Endothelial cell of umbilical vein (primary cell): ENCODE measurements at regions of chr19 and their contacts with region 1.

Region 1: DNA sequence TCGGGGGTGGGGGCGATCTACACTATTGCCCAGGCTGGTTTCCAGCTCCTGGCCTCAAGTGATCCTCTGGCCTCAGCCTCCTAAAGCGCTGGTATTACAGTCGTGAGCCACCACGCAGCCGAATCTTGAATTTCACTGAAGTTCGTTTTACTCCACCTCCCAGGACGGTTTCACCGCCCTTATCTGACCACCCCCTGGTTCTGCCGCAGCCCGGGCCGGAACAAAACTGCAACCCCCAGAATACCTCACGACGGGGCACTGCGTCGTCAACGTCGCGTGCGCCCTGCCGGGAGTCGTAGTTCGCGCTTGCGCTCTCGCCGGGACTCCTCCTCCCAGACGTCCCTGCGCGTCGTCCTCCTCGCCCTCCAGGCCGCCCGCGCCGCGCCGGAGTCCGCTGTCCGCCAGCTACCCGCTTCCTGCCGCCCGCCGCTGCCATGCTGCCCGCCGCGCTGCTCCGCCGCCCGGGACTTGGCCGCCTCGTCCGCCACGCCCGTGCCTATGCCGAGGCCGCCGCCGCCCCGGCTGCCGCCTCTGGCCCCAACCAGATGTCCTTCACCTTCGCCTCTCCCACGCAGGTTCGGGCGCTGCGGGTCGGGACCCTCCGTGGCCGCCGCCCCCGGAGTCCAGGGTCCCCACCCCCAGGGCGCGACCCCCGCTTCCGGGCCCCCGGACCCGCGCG is at the start of gene ATP5F1D:
- DNase-seq: peak; percentile 91
- H3K4me3 ChIP-seq: peak within 1 kb of the TSS; percentile 38 to 74 (median 58)
- H3K27ac ChIP-seq: peak within 1 kb of the TSS; percentile 36
- H3K4me1 ChIP-seq: peaks cover 12% of the 10 kb centered on the region
- H3K27me3 ChIP-seq: no peaks in the 10 kb centered on the region
- CTCF ChIP-seq: no peak
- POLR2A ChIP-seq: peak; percentile 64
- total RNA-seq, gene ATP5F1D: 190 and 192 TPM in 2 replicates

Region 2: DNA sequence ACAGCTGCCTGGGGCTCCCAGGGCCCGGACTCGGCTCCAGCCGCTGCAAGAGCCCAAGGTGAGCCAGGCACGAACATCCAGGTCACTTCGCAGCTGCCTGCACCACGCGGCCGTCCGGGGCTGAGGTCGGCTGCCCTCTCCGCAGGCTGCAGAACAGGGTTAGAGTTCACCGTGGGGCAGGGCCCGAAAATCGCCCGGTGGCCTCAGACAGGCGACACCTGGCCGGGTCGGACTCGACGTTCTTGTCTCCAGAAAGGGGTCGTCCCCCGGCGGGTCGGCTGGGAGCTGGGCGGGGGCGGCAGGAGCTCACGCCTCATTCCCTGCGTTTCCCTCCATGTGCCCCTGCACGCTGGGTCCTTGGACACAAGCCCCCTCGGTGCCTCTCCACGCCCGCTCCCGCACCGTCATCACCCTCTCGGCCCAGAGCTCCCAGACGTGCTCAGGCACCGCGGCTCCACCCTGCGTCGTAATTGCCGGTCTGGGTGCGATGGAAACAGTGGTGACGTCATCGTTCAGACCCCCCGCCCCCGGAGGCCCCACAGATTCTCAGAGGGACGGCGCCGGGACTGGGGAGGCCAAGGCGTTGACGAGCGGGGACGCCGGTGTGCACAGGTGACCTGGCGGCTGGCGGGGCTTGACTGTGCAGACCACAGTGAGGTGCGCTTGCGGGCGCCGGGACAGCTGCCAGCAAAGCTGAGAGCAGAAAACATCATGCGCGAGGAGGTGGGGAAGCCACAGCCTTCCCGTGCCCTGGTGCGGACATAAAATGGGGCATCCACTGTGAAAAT is 245.3 kb before region 1 on chr19:
- CTCF ChIA-PET with region 1: no interaction called
- POLR2A ChIA-PET with region 1: no interaction called
- dilution Hi-C with region 1: no loop called
- intact Hi-C with region 1: loop called (anchors 5 kb)
- DNase-seq: peak; percentile 35
- H3K4me3 ChIP-seq: no peak overlapping the region
- H3K27ac ChIP-seq: no peak overlapping the region
- H3K4me1 ChIP-seq: no peaks in the 10 kb centered on the region
- H3K27me3 ChIP-seq: peaks cover 20 to 27% of the 10 kb centered on the region in 2 experiments
- CTCF ChIP-seq: no peak
- POLR2A ChIP-seq: no peak

Region 3: DNA sequence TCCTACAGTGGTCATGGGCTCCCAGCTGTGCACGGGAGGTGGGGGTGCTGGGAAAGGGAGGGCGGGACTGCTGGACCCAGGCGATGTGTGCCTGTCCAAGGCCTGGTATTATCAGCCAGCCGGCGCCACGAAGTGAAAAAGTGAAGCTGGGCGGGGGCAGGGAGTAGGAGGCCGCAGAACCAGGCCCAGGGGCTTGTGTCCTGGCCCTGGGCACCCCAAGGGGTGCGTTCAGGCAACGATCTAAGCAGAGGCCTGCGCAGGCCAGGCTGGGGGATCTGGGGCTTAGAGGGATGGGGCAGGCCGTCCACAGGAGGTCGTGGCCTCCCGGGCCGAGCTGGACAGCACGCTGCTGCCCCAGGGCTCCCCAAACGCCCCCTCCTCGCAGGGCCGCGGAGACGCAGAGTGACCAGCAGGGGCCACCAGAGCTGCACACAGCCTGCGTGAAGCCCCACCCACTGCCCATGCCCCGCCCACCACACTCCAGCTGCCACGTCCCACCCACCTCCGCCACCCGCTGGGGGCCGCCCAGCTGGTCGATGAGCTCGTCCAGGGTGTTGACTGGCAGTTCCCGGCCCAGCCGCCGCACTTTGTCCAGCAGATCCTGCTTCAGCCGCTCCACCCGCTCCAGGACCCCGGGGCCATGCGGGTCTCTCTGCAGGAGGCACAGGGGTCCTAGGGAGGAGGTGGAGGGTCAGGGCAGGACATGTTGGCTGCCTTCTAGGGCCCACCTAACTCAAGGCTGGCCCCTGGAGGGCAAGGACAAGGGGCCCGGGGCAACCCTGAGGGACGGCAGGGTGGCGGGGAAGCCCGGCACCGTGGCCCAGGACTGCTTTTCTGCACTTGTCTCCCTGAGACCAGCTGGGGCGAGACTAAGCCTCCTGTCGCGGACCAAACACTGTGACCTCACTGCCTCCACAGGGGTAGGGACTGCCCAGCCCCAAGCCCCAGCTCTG is 128.2 kb before region 1 on chr19:
- CTCF ChIA-PET with region 1: interaction called, 11 read pairs
- POLR2A ChIA-PET with region 1: no interaction called
- dilution Hi-C with region 1: no loop called
- intact Hi-C with region 1: loop called (anchors 2 kb)
- DNase-seq: peak; percentile 93
- H3K4me3 ChIP-seq: no peak overlapping the region
- H3K27ac ChIP-seq: no peak overlapping the region
- H3K4me1 ChIP-seq: peaks cover 5% of the 10 kb centered on the region
- H3K27me3 ChIP-seq: no peaks in the 10 kb centered on the region
- CTCF ChIP-seq: peak; percentile 79 to 94
- POLR2A ChIP-seq: peak; percentile 56

Region 4: GRCh38 chr19:1125601-1126453 is 115.7 kb before region 1 on chr19:
- CTCF ChIA-PET with region 1: no interaction called
- POLR2A ChIA-PET with region 1: no interaction called
- dilution Hi-C with region 1: no loop called
- intact Hi-C with region 1: no loop called
- DNase-seq: peak; percentile 83
- H3K4me3 ChIP-seq: no peak overlapping the region
- H3K27ac ChIP-seq: peak overlapping the region; percentile 80
- H3K4me1 ChIP-seq: peaks cover 19% of the 10 kb centered on the region
- H3K27me3 ChIP-seq: no peaks in the 10 kb centered on the region
- CTCF ChIP-seq: no peak
- POLR2A ChIP-seq: no peak

Region 5: DNA sequence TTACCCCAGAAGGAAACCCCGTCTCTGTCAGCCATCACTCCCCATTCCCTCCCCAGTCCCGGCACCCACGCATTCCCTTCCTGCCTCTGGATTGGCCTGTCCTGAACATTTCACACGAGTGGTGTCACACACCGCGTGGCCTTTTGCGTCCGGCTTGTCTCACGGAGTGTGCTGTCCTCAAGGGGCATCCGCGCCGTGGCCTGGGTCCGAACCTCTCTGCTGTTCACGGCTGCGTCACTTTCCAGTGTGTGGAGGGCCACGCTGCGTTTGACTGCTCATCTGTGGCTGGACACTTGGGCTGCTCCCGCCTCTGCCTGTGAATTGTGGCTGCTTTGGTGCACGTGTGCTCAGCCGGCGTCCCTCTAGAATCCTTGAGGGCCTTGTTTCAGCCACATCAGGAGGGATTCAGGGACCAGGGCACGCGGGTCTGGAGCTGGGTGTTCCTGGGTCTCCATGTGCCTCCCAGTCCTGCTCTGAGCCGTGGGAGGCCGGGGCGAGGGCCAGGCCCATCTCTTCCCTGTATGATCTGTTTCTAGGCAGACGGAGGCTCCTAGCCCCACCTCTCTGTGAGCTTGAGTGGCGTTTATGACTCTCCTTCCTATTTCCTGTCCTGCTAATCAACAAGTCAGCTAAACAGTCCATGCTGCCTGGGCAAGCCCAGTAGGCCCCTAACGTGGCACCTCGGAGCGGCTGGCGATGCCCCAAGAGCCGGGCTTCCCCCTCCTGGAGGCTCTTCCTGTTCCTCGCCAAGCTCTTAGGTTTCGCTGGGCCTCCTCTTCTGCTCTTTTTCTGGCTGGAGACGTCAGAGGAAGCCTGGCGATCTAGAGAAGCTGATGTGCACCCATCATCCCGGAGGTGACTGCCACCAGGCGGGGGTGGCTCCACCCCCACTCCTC is 27.9 kb before region 1 on chr19:
- CTCF ChIA-PET with region 1: interaction called, 13 read pairs
- POLR2A ChIA-PET with region 1: no interaction called
- dilution Hi-C with region 1: no loop called
- intact Hi-C with region 1: no loop called
- DNase-seq: peak; percentile 96
- H3K4me3 ChIP-seq: no peak overlapping the region
- H3K27ac ChIP-seq: peak overlapping the region; percentile 48
- H3K4me1 ChIP-seq: peaks cover 31% of the 10 kb centered on the region
- H3K27me3 ChIP-seq: no peaks in the 10 kb centered on the region
- CTCF ChIP-seq: no peak
- POLR2A ChIP-seq: peak; percentile 27

Region 6: DNA sequence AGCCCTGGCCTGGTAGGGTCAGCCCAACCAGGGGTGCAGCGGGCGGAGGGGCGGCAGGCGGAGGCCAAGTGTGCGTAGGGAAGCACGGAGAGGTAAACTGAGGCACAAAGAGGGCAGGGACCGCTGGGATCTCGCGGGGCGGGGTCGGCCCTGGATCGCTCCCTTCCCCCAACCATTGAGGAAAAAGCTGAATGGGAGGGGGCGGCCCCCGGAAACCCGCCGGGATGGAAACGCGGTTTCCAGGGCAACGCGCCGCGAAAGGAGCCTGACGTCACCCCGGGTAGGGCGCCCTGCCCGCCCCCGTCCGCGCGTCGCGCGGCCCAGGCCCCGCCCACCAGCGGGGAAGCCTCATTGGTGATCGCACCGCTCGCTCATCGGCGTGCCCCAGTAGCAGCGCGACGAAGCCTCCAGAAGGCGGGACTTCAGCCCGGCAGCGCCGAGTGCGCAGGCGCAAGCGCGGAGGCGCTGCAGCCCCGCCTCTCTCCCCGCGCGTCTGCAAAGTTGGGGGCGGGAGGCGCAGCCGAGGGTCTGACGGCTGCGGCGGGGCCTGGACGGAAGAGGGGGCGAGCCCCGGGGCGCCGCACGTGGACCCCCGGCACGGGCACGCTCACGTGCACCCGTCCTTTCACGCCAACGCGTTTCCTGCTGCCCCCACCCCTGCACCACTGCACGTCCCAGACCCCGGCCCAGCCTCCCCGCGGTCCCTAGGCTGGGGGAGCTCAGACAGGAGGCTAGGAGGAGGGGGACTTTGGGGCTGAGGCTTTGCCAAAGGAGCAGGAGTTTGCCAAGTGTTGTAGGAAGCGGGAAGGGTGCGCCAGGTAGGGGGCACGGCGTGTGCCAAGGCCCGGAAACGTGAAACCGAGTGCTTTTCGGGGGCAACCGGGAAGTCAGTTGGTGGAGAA is 19.3 kb after region 1 on chr19:
- CTCF ChIA-PET with region 1: interaction called, 1,001 read pairs
- POLR2A ChIA-PET with region 1: interaction called, 24 read pairs
- dilution Hi-C with region 1: no loop called
- intact Hi-C with region 1: loop called (anchors 1 kb)
- DNase-seq: peak; percentile 96
- H3K4me3 ChIP-seq: peak overlapping the region; percentile 19 to 50 (median 37)
- H3K27ac ChIP-seq: peak overlapping the region; percentile 78
- H3K4me1 ChIP-seq: peaks cover 55% of the 10 kb centered on the region
- H3K27me3 ChIP-seq: no peaks in the 10 kb centered on the region
- CTCF ChIP-seq: no peak
- POLR2A ChIP-seq: no peak

Region 7: DNA sequence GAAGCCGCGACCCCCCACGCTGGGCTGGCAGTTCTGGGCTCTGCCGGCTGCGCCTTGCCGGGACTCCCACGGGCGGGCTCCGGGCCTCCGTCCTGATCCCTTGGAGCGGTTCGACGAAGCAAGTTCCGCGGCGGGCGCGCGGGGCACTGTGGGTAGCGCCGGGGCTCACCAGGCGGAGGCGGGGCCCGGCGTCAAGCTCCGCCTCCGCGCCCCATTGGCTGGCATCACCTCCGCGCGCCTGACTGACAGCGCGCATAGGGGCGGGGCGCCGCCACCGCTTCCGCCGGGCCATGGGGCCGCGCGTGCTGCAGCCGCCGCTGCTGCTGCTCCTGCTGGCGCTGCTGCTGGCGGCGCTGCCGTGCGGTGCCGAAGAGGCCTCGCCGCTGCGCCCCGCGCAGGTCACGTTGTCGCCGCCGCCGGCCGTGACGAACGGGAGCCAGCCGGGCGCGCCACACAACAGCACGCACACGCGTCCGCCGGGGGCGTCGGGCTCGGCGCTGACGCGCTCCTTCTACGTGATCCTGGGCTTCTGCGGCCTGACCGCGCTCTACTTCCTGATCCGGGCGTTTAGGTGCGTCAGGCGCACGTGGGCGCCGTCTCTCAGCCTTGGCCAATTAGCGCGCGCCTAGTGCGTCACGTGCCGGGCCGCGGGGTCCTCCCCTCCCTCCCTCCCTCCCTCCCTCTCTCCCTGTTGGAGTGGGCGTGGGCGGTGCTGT is 33.9 kb after region 1 on chr19 and contains the start of gene FAM174C:
- CTCF ChIA-PET with region 1: interaction called, 42 read pairs
- POLR2A ChIA-PET with region 1: interaction called, 4 read pairs
- dilution Hi-C with region 1: no loop called
- intact Hi-C with region 1: no loop called
- DNase-seq: peak; percentile 96
- H3K4me3 ChIP-seq: peak within 1 kb of the TSS; percentile 9 to 78 (median 53)
- H3K27ac ChIP-seq: peak within 1 kb of the TSS; percentile 95
- H3K4me1 ChIP-seq: peaks cover 29% of the 10 kb centered on the region
- H3K27me3 ChIP-seq: no peaks in the 10 kb centered on the region
- CTCF ChIP-seq: no peak
- POLR2A ChIP-seq: peak; percentile 91
- total RNA-seq, gene FAM174C: 46.7 and 47.5 TPM in 2 replicates